ENCODE measurements at regions of chr2 and their contacts with region 1.

Region 1: GRCh38 chr2:197191177-197191939 is 119.2 kb downstream of the ANKRD44 start:
- DNase-seq: peak; percentile 28
- ATAC-seq: 0 out of 2 replicates have a peak, but pooled peaks have one; percentile 48
- H3K4me3 ChIP-seq: no peak overlapping the region
- H3K27ac ChIP-seq: no peak overlapping the region
- H3K4me1 ChIP-seq: no peaks in the 10 kb centered on the region
- H3K27me3 ChIP-seq: no peaks in the 10 kb centered on the region
- CTCF ChIP-seq: peak; percentile 66
- POLR2A ChIP-seq: no peak
- RAD21 ChIP-seq: peak; percentile 69

Region 2: GRCh38 chr2:197229509-197230443 is 38.4 kb after region 1 on chr2:
- CTCF ChIA-PET with region 1: no interaction called
- POLR2A ChIA-PET with region 1: no interaction called
- dilution Hi-C with region 1: no loop called
- in situ Hi-C with region 1: no loop called
- intact Hi-C with region 1: no loop called
- DNase-seq: peak; percentile 88
- ATAC-seq: peak; percentile 82
- H3K4me3 ChIP-seq: no peak overlapping the region
- H3K27ac ChIP-seq: no peak overlapping the region
- H3K4me1 ChIP-seq: peaks cover 3% of the 10 kb centered on the region
- H3K27me3 ChIP-seq: no peaks in the 10 kb centered on the region
- CTCF ChIP-seq: no peak
- POLR2A ChIP-seq: no peak
- RAD21 ChIP-seq: no peak

Region 3: DNA sequence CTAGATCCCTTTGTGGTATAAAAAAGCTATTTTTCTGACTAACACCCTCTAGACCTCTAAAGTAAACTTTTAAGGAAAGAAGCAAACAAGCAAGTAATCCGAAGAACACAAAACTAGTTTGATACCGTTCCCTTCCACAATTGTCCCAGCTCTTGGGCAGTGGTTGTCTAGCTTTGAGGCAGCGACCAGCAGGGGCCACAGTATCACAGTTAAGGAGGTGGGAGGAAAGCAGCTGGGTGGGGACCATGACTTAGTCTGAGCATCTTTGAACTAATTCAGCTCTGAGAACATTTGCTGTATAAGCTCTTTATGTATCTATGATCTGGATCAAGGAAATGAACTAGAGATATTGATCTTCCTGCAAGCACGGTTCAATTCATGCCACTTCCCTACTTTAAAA is 192.5 kb after region 1 on chr2:
- CTCF ChIA-PET with region 1: no interaction called
- POLR2A ChIA-PET with region 1: no interaction called
- dilution Hi-C with region 1: no loop called
- in situ Hi-C with region 1: loop called (anchors 5 kb)
- intact Hi-C with region 1: no loop called
- DNase-seq: no peak
- ATAC-seq: no peak
- H3K4me3 ChIP-seq: no peak overlapping the region
- H3K27ac ChIP-seq: no peak overlapping the region
- H3K4me1 ChIP-seq: peaks cover 3% of the 10 kb centered on the region
- H3K27me3 ChIP-seq: no peaks in the 10 kb centered on the region; the same call in 1 of the 2 replicates
- CTCF ChIP-seq: no peak
- POLR2A ChIP-seq: no peak
- RAD21 ChIP-seq: no peak

Region 4: GRCh38 chr2:197777823-197778407 is 586.6 kb after region 1 on chr2:
- CTCF ChIA-PET with region 1: no interaction called
- POLR2A ChIA-PET with region 1: no interaction called
- dilution Hi-C with region 1: no loop called
- in situ Hi-C with region 1: no loop called
- intact Hi-C with region 1: no loop called
- DNase-seq: peak; percentile 51
- ATAC-seq: peak; percentile 63
- H3K4me3 ChIP-seq: no peak overlapping the region
- H3K27ac ChIP-seq: no peak overlapping the region
- H3K4me1 ChIP-seq: no peaks in the 10 kb centered on the region
- H3K27me3 ChIP-seq: no peaks in the 10 kb centered on the region
- CTCF ChIP-seq: peak; percentile 79
- POLR2A ChIP-seq: no peak
- RAD21 ChIP-seq: peak; percentile 80

Measured in IMR-90 (cell line).